Heart right ventricle (tissue), 16 donors: ENCODE measurements at regions of chr12 and their contacts with region 1.

Region 1: GRCh38 chr12:109504068-109504467 is 26.6 kb downstream of the UBE3B start:
- DNase-seq: no peak
- ATAC-seq: no peak
- H3K4me3 ChIP-seq: no peak overlapping the region
- H3K27ac ChIP-seq: no peak overlapping the region
- H3K4me1 ChIP-seq: no peaks in the 10 kb centered on the region
- H3K27me3 ChIP-seq: no peaks in the 10 kb centered on the region
- CTCF ChIP-seq: no peak

Region 2: DNA sequence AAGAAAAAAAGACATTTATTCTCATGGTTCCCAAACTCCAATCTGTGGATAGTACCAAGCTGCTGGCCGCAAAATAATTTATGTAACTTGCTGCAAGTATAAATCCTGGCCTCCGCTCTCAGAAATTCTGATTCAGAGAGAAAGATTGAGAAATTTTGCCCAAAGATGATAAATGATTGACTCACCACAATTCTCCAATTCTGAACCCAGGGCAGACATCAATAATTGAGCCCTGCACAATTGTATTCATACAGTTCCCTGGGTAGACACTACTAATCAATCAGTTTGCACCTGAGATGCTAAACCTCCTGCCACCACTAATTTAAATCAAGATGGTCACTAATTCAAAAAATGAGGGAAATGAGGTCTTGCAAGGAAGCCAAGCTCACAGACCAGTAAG is 291.0 kb after region 1 on chr12:
- intact Hi-C with region 1: no loop called
- DNase-seq: no peak
- ATAC-seq: no peak
- H3K4me3 ChIP-seq: no peak overlapping the region
- H3K27ac ChIP-seq: no peak overlapping the region
- H3K4me1 ChIP-seq: no peaks in the 10 kb centered on the region
- H3K27me3 ChIP-seq: no peaks in the 10 kb centered on the region
- CTCF ChIP-seq: no peak

Region 3: GRCh38 chr12:109910969-109911348 is 406.9 kb after region 1 on chr12:
- intact Hi-C with region 1: no loop called
- DNase-seq: no peak
- ATAC-seq: no peak
- H3K4me3 ChIP-seq: no peak overlapping the region
- H3K27ac ChIP-seq: no peak overlapping the region
- H3K4me1 ChIP-seq: peaks cover 0 to 4% (median 0%) of the 10 kb centered on the region in 9 donors
- H3K27me3 ChIP-seq: no peaks in the 10 kb centered on the region
- CTCF ChIP-seq: peak in 1 of 9 donors; percentile 27

Region 4: DNA sequence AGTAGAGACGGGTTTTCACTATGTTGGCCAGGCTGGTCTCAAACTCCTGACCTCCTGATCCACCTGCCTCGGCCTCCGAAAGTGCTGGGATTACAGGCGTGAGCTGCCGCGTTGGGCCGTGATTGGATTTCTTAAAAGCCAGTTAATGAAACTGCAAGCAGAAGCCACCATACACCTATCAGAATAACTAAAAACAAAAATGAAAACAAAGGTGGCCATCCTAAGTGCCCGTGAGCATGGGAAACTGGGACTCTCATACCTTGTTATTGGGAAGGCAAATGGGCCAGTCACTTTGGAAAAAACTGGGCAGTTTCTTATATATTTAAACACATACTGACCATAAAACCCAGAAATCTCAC is 1102.2 kb after region 1 on chr12:
- intact Hi-C with region 1: loop called in 1 of 10 experiments (anchors 5 kb)
- DNase-seq: no peak
- ATAC-seq: no peak
- H3K4me3 ChIP-seq: peak overlapping the region in 2 of 10 donors; percentile 20 to 35
- H3K27ac ChIP-seq: peak overlapping the region in 5 of 10 donors; percentile 17 to 91 (median 51)
- H3K4me1 ChIP-seq: peaks cover 0 to 12% (median 0%) of the 10 kb centered on the region in 9 donors
- H3K27me3 ChIP-seq: no peaks in the 10 kb centered on the region
- CTCF ChIP-seq: no peak